ENCODE measurements at regions of chr7 and their contacts with region 1.

Region 1: GRCh38 chr7:33243319-33243881 is 114.0 kb downstream of the BBS9 start:
- DNase-seq: peak; percentile 70
- ATAC-seq: peak; percentile 93
- H3K4me3 ChIP-seq: no peak overlapping the region
- H3K27ac ChIP-seq: no peak overlapping the region
- H3K4me1 ChIP-seq: no peaks in the 10 kb centered on the region
- H3K27me3 ChIP-seq: no peaks in the 10 kb centered on the region
- CTCF ChIP-seq: peak; percentile 85
- POLR2A ChIP-seq: no peak
- RAD21 ChIP-seq: peak; percentile 88

Region 2: DNA sequence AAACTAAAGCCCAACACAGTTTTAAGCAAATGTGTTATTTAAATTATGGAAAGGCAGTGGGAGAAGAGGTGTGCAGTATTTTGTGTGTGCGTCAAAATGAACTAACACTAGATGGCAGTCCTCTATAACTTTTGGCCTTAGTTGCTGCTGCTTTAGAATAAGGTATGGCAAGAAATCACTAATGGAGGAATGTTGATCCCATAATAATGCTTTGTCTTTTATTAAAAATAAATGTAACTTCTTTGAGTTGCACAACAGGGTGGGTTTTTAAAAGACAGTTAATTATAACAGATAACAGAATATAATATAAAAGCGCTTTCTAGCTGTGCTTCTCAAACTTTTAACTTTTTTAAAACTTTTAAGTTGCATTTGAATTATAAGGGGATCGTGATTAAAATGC is 57.6 kb before region 1 on chr7:
- CTCF ChIA-PET with region 1: interaction called, 4 read pairs
- POLR2A ChIA-PET with region 1: interaction called, 3 read pairs
- dilution Hi-C with region 1: no loop called
- in situ Hi-C with region 1: no loop called
- intact Hi-C with region 1: loop called (anchors 5 kb)
- DNase-seq: peak; percentile 68
- ATAC-seq: peak; percentile 97
- H3K4me3 ChIP-seq: no peak overlapping the region
- H3K27ac ChIP-seq: no peak overlapping the region
- H3K4me1 ChIP-seq: no peaks in the 10 kb centered on the region
- H3K27me3 ChIP-seq: no peaks in the 10 kb centered on the region
- CTCF ChIP-seq: peak; percentile 80
- POLR2A ChIP-seq: no peak
- RAD21 ChIP-seq: peak; percentile 85

Region 3: GRCh38 chr7:33423646-33424020 is 180.2 kb after region 1 on chr7:
- CTCF ChIA-PET with region 1: no interaction called
- POLR2A ChIA-PET with region 1: no interaction called
- dilution Hi-C with region 1: no loop called
- in situ Hi-C with region 1: no loop called
- intact Hi-C with region 1: loop called (anchors 5 kb)
- DNase-seq: no peak
- ATAC-seq: no peak
- H3K4me3 ChIP-seq: no peak overlapping the region
- H3K27ac ChIP-seq: no peak overlapping the region
- H3K4me1 ChIP-seq: peaks cover 7% of the 10 kb centered on the region; the same call in 1 of the 2 replicates
- H3K27me3 ChIP-seq: peaks cover 13% of the 10 kb centered on the region
- CTCF ChIP-seq: peak; percentile 26; the same call in 1 of the 2 replicates
- POLR2A ChIP-seq: no peak
- RAD21 ChIP-seq: peak; percentile 36

Region 4: GRCh38 chr7:33459340-33459751 is 215.9 kb after region 1 on chr7:
- CTCF ChIA-PET with region 1: no interaction called
- POLR2A ChIA-PET with region 1: no interaction called
- dilution Hi-C with region 1: no loop called
- in situ Hi-C with region 1: no loop called
- intact Hi-C with region 1: loop called (anchors 2 kb)
- DNase-seq: peak; percentile 66
- ATAC-seq: peak; percentile 99
- H3K4me3 ChIP-seq: no peak overlapping the region
- H3K27ac ChIP-seq: no peak overlapping the region
- H3K4me1 ChIP-seq: no peaks in the 10 kb centered on the region
- H3K27me3 ChIP-seq: no peaks in the 10 kb centered on the region
- CTCF ChIP-seq: peak; percentile 54
- POLR2A ChIP-seq: no peak
- RAD21 ChIP-seq: peak; percentile 64

Region 5: GRCh38 chr7:33757562-33758165 is 514.3 kb after region 1 on chr7:
- CTCF ChIA-PET with region 1: no interaction called
- POLR2A ChIA-PET with region 1: no interaction called
- dilution Hi-C with region 1: no loop called
- in situ Hi-C with region 1: no loop called
- intact Hi-C with region 1: loop called (anchors 10 kb)
- DNase-seq: peak; percentile 47
- ATAC-seq: no peak
- H3K4me3 ChIP-seq: no peak overlapping the region
- H3K27ac ChIP-seq: no peak overlapping the region
- H3K4me1 ChIP-seq: peaks cover 9% of the 10 kb centered on the region
- H3K27me3 ChIP-seq: no peaks in the 10 kb centered on the region
- CTCF ChIP-seq: peak; percentile 58
- POLR2A ChIP-seq: no peak
- RAD21 ChIP-seq: peak; percentile 64

Region 6: GRCh38 chr7:34165929-34166550 is 922.6 kb after region 1 on chr7:
- CTCF ChIA-PET with region 1: no interaction called
- POLR2A ChIA-PET with region 1: no interaction called
- dilution Hi-C with region 1: no loop called
- in situ Hi-C with region 1: loop called (anchors 25 kb)
- intact Hi-C with region 1: loop called (anchors 5 kb)
- DNase-seq: peak; percentile 60
- ATAC-seq: peak; percentile 82
- H3K4me3 ChIP-seq: no peak overlapping the region
- H3K27ac ChIP-seq: no peak overlapping the region
- H3K4me1 ChIP-seq: peaks cover 2% of the 10 kb centered on the region; the same call in 1 of the 2 replicates
- H3K27me3 ChIP-seq: no peaks in the 10 kb centered on the region
- CTCF ChIP-seq: peak; percentile 76
- POLR2A ChIP-seq: no peak
- RAD21 ChIP-seq: peak; percentile 74

Region 7: DNA sequence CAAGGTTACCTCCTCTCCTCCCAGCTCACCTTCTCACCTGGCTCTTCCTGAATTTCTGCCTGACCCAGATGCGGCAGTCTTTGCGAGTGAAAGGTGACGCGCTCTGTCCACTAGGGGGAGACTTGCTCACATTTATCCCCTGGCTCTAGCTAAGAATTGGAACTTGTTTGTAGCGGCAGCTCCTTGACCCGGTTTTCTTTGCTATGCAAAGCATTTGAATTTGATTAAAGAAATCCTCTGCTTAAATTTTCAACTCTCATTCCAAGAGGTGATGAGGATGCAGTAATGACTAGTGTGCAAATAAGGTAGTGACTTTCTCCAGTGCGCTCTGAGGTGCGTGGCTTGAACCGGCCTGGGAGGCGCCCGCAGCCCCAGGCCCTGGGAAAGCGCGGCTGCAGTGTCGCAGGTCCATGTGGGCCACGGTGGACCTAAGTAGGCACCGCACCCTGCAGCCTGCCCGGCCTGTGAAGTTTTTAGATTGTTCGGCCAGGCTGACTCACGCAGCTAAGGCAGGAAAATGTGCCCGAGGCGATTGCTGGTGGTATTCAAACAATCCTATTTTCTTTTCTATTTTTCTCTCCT is 1077.7 kb after region 1 on chr7:
- CTCF ChIA-PET with region 1: no interaction called
- POLR2A ChIA-PET with region 1: no interaction called
- dilution Hi-C with region 1: no loop called
- in situ Hi-C with region 1: no loop called
- intact Hi-C with region 1: loop called (anchors 10 kb)
- DNase-seq: peak; percentile 58
- ATAC-seq: peak; percentile 93
- H3K4me3 ChIP-seq: no peak overlapping the region
- H3K27ac ChIP-seq: no peak overlapping the region
- H3K4me1 ChIP-seq: peaks cover 5% of the 10 kb centered on the region
- H3K27me3 ChIP-seq: no peaks in the 10 kb centered on the region
- CTCF ChIP-seq: peak; percentile 80
- POLR2A ChIP-seq: no peak
- RAD21 ChIP-seq: peak; percentile 66

Measured in IMR-90 (cell line).